Astrocyte of the cerebellum (primary cell): ENCODE measurements at regions of chr1 and their contacts with region 1.

Region 1: DNA sequence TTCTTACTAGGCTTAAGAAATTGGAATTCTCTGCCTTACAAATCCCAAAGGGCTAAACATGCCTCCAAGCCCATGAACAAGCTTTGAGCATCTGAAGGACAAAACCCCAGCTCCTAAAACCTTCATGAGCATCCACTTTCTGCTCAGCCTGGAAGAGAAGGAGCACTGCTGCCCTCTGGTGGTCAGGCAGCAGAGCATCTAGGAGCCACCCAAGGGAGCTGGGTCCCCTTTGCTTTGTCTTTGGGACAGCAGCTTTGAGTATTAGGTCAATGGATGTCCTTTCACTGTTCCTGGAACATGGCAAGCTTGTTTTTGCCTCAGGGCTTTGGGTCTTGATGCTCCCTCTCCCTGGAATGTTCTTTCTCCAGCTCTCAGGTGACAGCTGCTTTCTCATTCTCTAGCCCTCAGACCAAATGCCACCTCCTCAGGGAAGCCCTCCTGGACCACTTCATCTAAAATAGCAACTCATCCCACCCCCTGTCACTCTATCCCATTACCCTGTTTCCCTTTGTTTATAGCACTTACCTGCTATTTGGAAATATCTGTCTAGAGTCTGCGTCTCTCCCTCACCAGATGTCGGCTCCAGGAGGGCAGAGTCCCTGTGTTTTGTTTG is 25.7 kb downstream of the RAB7B start:
- DNase-seq: peak; percentile 60
- H3K4me3 ChIP-seq: no peak overlapping the region
- CTCF ChIP-seq: peak; percentile 97

Region 2: DNA sequence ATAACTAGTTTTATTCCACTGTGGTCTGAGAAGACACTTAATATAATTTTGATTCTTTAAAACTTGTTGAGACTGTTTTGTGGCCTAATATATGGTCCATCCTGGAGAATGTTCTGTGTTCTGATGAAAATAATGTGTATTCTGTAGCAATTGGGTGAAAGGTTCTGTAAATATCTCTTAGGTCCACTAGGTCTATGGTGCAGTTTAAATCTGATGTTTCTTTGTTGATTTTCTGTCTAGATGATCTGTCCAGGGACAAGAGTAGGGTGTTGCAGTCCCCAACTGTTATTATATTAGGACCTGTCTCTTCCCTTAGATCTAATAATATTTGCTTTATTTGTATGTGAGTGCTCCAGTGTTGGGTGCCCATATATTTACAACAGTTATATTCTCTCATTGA is 93.7 kb before region 1 on chr1:
- in situ Hi-C with region 1: no loop called
- DNase-seq: no peak
- H3K4me3 ChIP-seq: no peak overlapping the region
- CTCF ChIP-seq: no peak

Region 3: DNA sequence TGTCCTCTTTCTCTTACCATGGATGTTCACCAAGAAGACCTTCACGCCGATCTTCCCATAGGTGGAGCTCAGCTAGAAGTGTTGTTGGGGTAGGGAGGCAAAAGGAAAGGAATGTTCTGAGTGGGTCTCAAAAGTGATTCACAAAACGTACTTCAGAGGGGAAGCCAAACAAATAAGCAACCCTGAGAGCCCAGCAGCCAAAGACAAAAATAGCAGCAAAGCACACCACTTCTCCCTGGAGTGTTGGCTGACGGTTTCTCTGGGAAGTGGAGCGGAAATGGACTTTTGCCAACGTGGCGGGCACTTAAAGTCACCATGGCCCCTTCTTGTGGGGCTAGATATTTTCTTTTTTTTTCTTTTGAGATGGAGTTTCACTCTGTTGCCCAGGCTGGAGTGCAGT is 57.3 kb before region 1 on chr1:
- in situ Hi-C with region 1: loop called (anchors 10 kb)
- DNase-seq: no peak
- H3K4me3 ChIP-seq: no peak overlapping the region
- CTCF ChIP-seq: no peak

Region 4: DNA sequence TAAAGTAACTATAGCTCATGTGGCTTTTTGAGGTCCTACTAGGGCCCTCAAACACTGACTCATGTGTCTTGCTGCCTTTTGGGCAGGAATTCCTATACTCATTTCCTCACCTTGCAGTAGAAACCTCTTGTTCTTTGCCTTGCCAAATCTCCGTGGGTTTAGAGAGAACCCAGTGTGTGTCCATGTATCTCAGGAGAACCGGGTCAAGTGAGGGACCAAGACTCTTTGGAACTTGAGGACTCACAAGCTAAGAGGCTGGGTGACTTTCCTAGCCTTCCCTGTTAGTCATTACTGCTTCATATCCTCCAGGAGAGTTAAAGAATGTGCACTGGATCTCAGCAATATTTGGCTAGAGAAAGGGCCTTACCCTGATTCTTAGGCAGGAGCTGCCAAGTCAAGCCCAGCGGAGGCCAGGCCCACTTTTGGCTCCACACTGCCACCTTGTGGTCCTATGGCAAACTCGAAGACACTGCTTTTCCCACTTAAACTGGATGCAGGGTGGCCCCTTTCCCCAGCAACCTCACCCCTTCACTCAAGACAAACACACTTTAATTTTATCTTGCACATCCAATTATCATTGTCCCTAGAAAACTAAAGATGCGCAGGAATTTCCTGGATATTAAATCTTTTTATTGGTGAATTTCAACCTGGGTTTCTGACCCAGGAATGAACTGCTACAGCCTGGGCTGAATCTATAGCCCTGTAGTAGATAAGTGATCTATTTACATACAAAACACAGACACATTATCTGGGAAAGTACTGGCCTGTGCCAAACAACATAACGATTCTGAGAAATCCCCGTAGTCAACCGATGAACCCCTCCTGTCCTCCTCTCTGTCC is 129.0 kb after region 1 on chr1:
- in situ Hi-C with region 1: loop called (anchors 25 kb)
- DNase-seq: peak; percentile 63
- H3K4me3 ChIP-seq: no peak overlapping the region
- CTCF ChIP-seq: peak; percentile 90